Activated CD8-positive, alpha-beta T cell treated with anti-CD3 and anti-CD28 coated beads for 36 hours (primary cell): ENCODE measurements at regions of chr19 and their contacts with region 1.

Region 1: DNA sequence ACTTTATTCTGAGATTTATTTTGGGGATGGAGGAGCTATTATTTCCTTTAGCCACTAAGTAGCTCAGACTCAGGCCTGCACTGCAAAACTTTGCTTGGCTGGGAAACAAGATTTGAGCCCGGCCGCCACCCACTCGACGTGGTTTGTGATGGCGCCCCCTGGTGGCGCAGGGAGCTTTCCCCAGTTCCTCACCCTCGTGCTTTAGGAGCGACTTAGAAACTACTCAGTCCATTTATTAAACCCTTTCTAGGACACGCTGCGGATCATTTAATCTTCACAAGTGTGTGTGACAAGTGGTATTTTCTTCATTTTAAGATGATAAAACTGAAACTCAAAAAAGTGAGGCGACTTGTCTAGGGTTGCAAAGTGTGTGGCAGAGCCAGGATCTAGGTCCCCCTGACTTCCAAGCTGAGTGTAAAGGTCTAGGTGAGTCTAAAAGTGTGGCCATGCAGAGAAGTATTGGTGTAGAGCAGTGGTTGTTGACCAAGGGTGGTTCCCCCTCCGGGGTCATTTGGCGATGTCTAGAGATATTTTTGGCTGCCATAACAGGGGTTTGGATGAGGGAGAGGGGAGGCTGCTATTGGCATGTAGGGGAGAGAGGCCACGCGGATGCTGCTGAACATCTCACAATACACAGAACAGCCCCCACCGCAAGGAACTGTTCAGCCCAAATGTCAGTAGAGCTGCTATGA is 2.2 kb downstream of the CXCL17 start:
- DNase-seq: peak; percentile 89
- ATAC-seq: peak; percentile 55
- H3K4me3 Mint-ChIP-seq: no peak overlapping the region
- H3K27ac Mint-ChIP-seq: peak overlapping the region; percentile 45
- H3K4me1 Mint-ChIP-seq: peaks cover 18% of the 10 kb centered on the region
- H3K27me3 Mint-ChIP-seq: no peaks in the 10 kb centered on the region
- CTCF ChIP-seq: peak; percentile 92

Region 2: GRCh38 chr19:42396381-42397262 is 43.9 kb before region 1 on chr19:
- CTCF ChIA-PET with region 1: interaction called, 18 read pairs
- POLR2A ChIA-PET with region 1: interaction called, 3 read pairs
- intact Hi-C with region 1: no loop called
- DNase-seq: peak; percentile 98
- ATAC-seq: peak; percentile 98
- H3K4me3 Mint-ChIP-seq: peak overlapping the region; percentile 91
- H3K27ac Mint-ChIP-seq: peak overlapping the region; percentile 93
- H3K4me1 Mint-ChIP-seq: peaks cover 39% of the 10 kb centered on the region
- H3K27me3 Mint-ChIP-seq: peaks cover 1% of the 10 kb centered on the region
- CTCF ChIP-seq: no peak

Region 3: DNA sequence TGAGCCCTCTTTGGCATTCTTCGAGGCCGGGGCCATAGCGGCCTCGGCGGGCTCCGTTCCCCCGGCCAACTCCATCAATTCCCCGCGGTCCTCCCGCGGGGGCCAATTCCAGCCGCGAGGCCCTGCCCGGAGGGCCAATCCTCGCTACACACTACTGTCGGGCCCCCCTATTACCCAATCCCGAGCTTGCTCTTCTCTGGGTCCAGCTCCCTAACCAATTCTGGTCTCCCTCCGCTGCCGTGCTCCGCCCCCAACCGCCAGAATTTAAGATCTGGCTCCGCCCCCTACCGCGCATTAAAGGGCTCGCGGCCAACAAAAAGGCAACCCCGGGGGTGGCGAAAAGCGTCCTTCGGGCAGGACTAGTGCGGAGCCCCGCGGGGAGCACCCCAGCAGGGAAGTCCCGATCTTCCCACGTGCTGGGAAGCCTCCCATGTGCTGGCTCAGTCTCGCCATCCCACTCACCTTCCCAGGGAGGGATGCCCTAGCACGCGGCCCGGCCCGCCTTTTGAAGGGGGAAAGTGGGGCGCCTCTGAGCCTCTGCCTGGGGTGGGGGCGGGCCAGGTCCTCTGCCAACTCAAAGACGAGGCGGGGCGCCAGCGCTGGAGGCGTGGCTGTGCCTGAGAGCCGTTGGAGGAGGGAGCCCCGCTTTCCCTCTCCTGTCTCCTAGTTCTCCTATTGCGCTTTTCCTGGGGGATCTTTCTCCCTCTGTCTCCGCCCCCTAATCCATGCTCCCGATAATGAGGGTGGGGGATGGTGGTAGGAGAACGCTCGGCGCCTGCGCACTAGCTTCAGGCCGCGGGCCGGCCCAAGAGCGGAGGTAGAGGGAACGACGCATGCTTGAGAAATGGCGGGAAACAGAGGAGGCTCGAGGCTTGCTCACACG is 16.8 kb before region 1 on chr19:
- CTCF ChIA-PET with region 1: interaction called, 44 read pairs
- POLR2A ChIA-PET with region 1: interaction called, 3 read pairs
- intact Hi-C with region 1: no loop called
- DNase-seq: peak; percentile 97
- ATAC-seq: peak; percentile 92
- H3K4me3 Mint-ChIP-seq: peak overlapping the region; percentile 90
- H3K27ac Mint-ChIP-seq: peak overlapping the region; percentile 89
- H3K4me1 Mint-ChIP-seq: peaks cover 34% of the 10 kb centered on the region
- H3K27me3 Mint-ChIP-seq: no peaks in the 10 kb centered on the region
- CTCF ChIP-seq: no peak

Region 4: GRCh38 chr19:42468273-42468796 is 27.8 kb after region 1 on chr19:
- CTCF ChIA-PET with region 1: interaction called, 20 read pairs
- POLR2A ChIA-PET with region 1: no interaction called
- intact Hi-C with region 1: no loop called
- DNase-seq: no peak
- ATAC-seq: no peak
- H3K4me3 Mint-ChIP-seq: no peak overlapping the region
- H3K27ac Mint-ChIP-seq: no peak overlapping the region
- H3K4me1 Mint-ChIP-seq: peaks cover 28% of the 10 kb centered on the region
- H3K27me3 Mint-ChIP-seq: peaks cover 2% of the 10 kb centered on the region
- CTCF ChIP-seq: no peak

Region 5: DNA sequence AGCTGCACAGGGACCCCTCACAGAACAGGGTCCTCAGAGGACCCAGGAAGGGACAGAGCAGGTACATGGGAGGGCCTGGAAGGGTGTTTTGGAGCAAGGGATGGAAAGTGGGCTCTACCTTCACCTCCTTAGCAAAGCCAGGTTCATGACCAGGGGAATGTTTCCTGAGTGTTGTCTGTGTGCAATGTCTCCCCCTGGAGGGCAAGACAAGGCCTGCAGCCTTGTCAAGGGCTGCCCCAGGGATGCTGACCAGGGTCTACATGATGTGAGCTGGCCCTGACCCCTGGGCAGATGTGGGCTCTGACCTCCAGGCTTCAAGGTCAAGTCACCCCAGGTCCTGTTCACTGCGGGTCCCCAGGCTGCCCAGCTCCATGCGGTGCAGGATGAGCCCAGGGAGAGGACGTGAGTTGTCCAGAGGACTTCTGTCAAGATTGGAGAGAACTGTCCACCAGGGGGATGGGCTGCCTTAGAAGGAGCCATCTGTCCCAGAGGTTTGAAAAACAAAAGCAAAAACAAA is 88.8 kb after region 1 on chr19:
- CTCF ChIA-PET with region 1: interaction called, 44 read pairs
- POLR2A ChIA-PET with region 1: no interaction called
- intact Hi-C with region 1: no loop called
- DNase-seq: peak; percentile 83
- ATAC-seq: peak; percentile 87
- H3K4me3 Mint-ChIP-seq: peak overlapping the region; percentile 72
- H3K27ac Mint-ChIP-seq: peak overlapping the region; percentile 94
- H3K4me1 Mint-ChIP-seq: peaks cover 27% of the 10 kb centered on the region
- H3K27me3 Mint-ChIP-seq: no peaks in the 10 kb centered on the region
- CTCF ChIP-seq: peak; percentile 88